Activated B cell treated with CpG ODN at 0.5 μM for 24 hours (primary cell): ENCODE measurements at regions of chr14 and their contacts with region 1.

Region 1: GRCh38 chr14:64503478-64504309 is at the start of gene ZBTB25:
- DNase-seq: peak; percentile 91
- ATAC-seq: peak; percentile 66
- H3K4me3 Mint-ChIP-seq: peak within 1 kb of the TSS; percentile 97
- H3K27ac Mint-ChIP-seq: peak within 1 kb of the TSS; percentile 100
- H3K4me1 Mint-ChIP-seq: peaks cover 73% of the 10 kb centered on the region
- H3K27me3 Mint-ChIP-seq: no peaks in the 10 kb centered on the region
- CTCF ChIP-seq: no peak
- total RNA-seq, gene ZBTB25: 20.9 and 29.1 TPM in 2 replicates

Region 2: GRCh38 chr14:63543000-63543825 is 960.5 kb before region 1 on chr14 and contains the start of gene PPP2R5E:
- CTCF ChIA-PET with region 1: no interaction called
- POLR2A ChIA-PET with region 1: interaction called, 4 read pairs
- intact Hi-C with region 1: loop called (anchors 2 kb)
- DNase-seq: peak; percentile 87
- ATAC-seq: peak; percentile 96
- H3K4me3 Mint-ChIP-seq: peak within 1 kb of the TSS; percentile 97
- H3K27ac Mint-ChIP-seq: peak within 1 kb of the TSS; percentile 92
- H3K4me1 Mint-ChIP-seq: peaks cover 34% of the 10 kb centered on the region
- H3K27me3 Mint-ChIP-seq: no peaks in the 10 kb centered on the region
- CTCF ChIP-seq: no peak
- total RNA-seq, gene PPP2R5E: 40.0 and 44.8 TPM in 2 replicates

Region 3: DNA sequence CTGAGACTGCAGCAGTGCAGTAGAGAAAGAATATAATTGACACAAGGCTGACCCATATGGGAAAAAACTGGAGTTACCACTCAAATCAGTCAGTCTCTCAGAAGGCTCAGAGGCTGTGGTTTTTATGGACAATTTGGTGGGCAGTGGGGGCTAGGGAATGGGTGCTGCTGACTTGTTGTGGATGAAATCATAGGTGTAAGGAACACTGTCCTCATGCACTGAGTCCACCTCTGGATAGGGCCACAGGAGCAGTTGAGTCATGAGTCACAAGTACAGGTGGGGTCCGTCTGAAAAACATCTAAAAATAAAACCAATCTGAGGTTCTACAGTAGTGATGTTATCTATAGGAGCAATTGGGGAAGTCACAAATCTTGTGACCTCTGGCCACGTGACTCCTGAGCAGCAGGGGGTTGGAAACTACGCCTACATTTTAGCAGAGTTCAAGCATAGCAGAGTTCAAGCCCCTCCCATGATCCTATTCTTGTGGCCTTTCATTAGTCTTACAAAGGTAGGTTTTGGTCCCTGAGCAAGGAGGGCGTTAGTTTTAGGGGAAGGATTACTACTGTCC is 757.8 kb before region 1 on chr14:
- CTCF ChIA-PET with region 1: no interaction called
- POLR2A ChIA-PET with region 1: interaction called, 3 read pairs
- intact Hi-C with region 1: loop called (anchors 5 kb)
- DNase-seq: peak; percentile 36
- ATAC-seq: peak; percentile 75
- H3K4me3 Mint-ChIP-seq: peak overlapping the region; percentile 63
- H3K27ac Mint-ChIP-seq: peak overlapping the region; percentile 96
- H3K4me1 Mint-ChIP-seq: peaks cover 47% of the 10 kb centered on the region
- H3K27me3 Mint-ChIP-seq: no peaks in the 10 kb centered on the region
- CTCF ChIP-seq: no peak

Region 4: DNA sequence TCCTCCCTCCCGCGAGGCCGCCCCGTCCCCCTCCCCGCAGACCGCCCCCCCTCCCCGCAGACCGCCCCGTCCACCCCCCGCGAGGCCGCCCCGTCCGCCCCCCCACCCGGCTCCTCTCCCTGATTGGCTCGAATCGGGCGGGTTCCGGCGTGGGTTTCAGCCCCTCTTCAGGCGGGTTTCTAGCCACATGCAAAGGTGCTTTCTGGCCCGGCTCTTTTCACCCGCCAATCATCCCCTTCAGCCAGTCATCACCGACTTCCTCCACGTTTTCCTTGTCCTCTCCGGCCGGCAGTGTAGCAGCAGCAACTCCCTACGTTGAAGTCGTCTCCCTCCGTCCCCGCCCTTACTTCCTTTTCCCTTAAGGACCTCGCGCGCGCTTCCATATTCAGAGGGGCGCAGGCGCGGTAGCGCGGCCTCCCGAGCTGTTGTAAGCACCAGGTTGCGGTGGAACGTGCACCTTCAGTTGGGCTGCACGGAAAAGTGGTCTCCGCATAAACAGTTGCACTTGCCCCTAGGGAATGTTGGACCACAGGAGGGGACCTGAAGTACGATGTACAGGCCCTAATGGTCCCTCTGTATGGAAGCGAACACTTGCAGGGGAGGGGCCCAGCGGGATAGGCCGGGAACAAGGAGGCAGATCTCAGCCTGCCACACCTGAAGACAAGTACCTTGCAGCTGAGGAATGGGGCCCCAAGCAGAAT is 164.9 kb before region 1 on chr14:
- CTCF ChIA-PET with region 1: interaction called, 41 read pairs
- POLR2A ChIA-PET with region 1: interaction called, 21 read pairs
- intact Hi-C with region 1: loop called (anchors 1 kb)
- DNase-seq: peak; percentile 76
- ATAC-seq: peak; percentile 87
- H3K4me3 Mint-ChIP-seq: peak overlapping the region; percentile 94
- H3K27ac Mint-ChIP-seq: peak overlapping the region; percentile 94
- H3K4me1 Mint-ChIP-seq: peaks cover 31% of the 10 kb centered on the region
- H3K27me3 Mint-ChIP-seq: no peaks in the 10 kb centered on the region
- CTCF ChIP-seq: no peak

Region 5: DNA sequence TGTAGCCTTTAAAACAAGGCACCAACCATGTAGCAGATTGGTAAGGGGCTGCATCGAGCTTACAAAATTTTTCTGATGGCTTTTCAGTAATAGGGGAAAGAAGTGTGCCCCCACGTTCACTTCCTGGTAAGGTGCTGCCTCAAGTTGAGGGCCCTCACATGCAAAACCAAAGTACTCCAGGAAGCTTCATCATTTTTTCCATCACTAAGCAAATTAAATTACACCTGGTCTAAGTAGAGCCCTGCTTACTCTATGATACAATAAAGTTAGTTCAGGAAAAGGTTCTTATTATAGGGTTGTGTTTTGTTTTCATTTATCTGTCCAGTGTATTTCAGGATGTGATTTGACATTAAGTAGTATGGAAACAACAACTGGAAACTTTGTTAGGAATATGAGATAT is 53.4 kb before region 1 on chr14:
- CTCF ChIA-PET with region 1: no interaction called
- POLR2A ChIA-PET with region 1: interaction called, 36 read pairs
- intact Hi-C with region 1: loop called (anchors 1 kb)
- DNase-seq: no peak
- ATAC-seq: peak; percentile 56
- H3K4me3 Mint-ChIP-seq: no peak overlapping the region
- H3K27ac Mint-ChIP-seq: peak overlapping the region; percentile 85
- H3K4me1 Mint-ChIP-seq: peaks cover 44% of the 10 kb centered on the region
- H3K27me3 Mint-ChIP-seq: no peaks in the 10 kb centered on the region
- CTCF ChIP-seq: no peak

Region 6: GRCh38 chr14:64488590-64489099 is 15.0 kb before region 1 on chr14:
- CTCF ChIA-PET with region 1: interaction called, 3 read pairs
- POLR2A ChIA-PET with region 1: interaction called, 6 read pairs
- intact Hi-C with region 1: loop called (anchors 2 kb)
- DNase-seq: no peak
- ATAC-seq: no peak
- H3K4me3 Mint-ChIP-seq: no peak overlapping the region
- H3K27ac Mint-ChIP-seq: no peak overlapping the region
- H3K4me1 Mint-ChIP-seq: peaks cover 16% of the 10 kb centered on the region
- H3K27me3 Mint-ChIP-seq: no peaks in the 10 kb centered on the region
- CTCF ChIP-seq: no peak